ENCODE measurements at regions of chr3 and their contacts with region 1.

Region 1: GRCh38 chr3:42101048-42101447 is 9.9 kb downstream of the TRAK1 start:
- DNase-seq: peak; percentile 37 to 67 (median 56)
- ATAC-seq: peak; percentile 66 to 77 (median 70)
- H3K4me3 ChIP-seq: no peak overlapping the region
- H3K27ac ChIP-seq: peak overlapping the region; percentile 25 to 71 (median 64)
- H3K4me1 ChIP-seq: peaks cover 20 to 73% (median 66%) of the 10 kb centered on the region in 12 donors
- H3K27me3 ChIP-seq: no peaks in the 10 kb centered on the region
- CTCF ChIP-seq: no peak
- POLR2A ChIP-seq: no peak

Region 2: GRCh38 chr3:40971191-40972168 is 1129.6 kb before region 1 on chr3:
- intact Hi-C with region 1: loop called in 1 of 10 experiments (anchors 10 kb)
- DNase-seq: peak; percentile 64 to 85 (median 76)
- ATAC-seq: peak; percentile 80 to 96 (median 94)
- H3K4me3 ChIP-seq: no peak overlapping the region
- H3K27ac ChIP-seq: peak overlapping the region; percentile 35 to 88 (median 72)
- H3K4me1 ChIP-seq: peaks cover 8 to 63% (median 54%) of the 10 kb centered on the region in 12 donors
- H3K27me3 ChIP-seq: no peaks in the 10 kb centered on the region
- CTCF ChIP-seq: peak in 1 of 12 donors; percentile 13
- POLR2A ChIP-seq: no peak

Region 3: DNA sequence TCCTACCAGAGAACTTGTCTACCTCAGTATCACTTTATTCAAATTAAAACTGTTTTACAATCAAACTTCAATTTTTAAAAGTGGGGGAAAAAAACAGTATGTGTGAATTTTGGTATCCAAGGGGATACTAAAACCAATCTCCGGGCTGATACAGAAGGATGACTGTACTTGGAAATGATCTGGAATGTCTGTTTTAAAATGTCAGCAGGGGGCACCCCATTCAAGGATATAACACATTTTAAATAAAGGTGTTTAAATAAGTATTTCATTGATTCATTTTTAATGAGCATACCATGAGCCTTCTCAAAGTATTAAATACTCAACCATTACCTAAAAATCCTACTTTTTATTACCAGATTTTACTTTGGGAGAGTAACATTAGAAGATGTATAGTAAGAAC is 207.1 kb before region 1 on chr3:
- intact Hi-C with region 1: loop called in 8 of 10 experiments (anchors 1 to 5 kb)
- DNase-seq: peak in 1 of 5 donors; percentile 12
- ATAC-seq: no peak
- H3K4me3 ChIP-seq: no peak overlapping the region
- H3K27ac ChIP-seq: no peak overlapping the region
- H3K4me1 ChIP-seq: peaks cover 0 to 7% (median 0%) of the 10 kb centered on the region in 12 donors
- H3K27me3 ChIP-seq: no peaks in the 10 kb centered on the region
- CTCF ChIP-seq: peak; percentile 31 to 71 (median 63)
- POLR2A ChIP-seq: no peak

Region 4: DNA sequence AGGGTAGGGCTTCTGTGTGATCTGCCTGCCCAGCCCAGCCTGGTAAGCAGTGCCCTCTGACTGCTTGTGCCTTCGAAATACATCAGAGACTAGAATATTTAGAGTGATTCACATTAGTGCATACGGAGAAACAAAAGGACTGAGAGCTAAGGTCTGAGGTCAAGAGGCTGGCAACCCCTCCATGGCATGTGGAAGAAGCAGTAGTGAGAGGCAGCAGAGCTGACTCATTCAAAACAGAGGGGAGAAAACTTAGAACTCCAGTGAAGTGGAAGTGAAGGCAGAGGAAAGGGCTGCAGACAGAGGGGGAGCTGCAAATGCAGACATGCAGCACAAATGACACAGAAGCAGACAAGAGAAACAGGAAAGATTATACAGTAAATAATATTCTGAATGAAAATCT is 200.8 kb before region 1 on chr3:
- intact Hi-C with region 1: loop called in 7 of 10 experiments (anchors 2 to 5 kb)
- DNase-seq: no peak
- ATAC-seq: no peak
- H3K4me3 ChIP-seq: no peak overlapping the region
- H3K27ac ChIP-seq: no peak overlapping the region
- H3K4me1 ChIP-seq: peaks cover 0 to 8% (median 0%) of the 10 kb centered on the region in 12 donors
- H3K27me3 ChIP-seq: no peaks in the 10 kb centered on the region
- CTCF ChIP-seq: no peak
- POLR2A ChIP-seq: no peak

Region 5: GRCh38 chr3:41961750-41962679 is 139.0 kb before region 1 on chr3 and contains the start of gene ULK4:
- intact Hi-C with region 1: loop called in 5 of 10 experiments (anchors 2 to 5 kb)
- DNase-seq: peak; percentile 97 to 99 (median 98)
- ATAC-seq: peak; percentile 98
- H3K4me3 ChIP-seq: peak within 1 kb of the TSS; percentile 75 to 98 (median 88)
- H3K27ac ChIP-seq: peak within 1 kb of the TSS in 11 of 12 donors; percentile 52 to 86 (median 75)
- H3K4me1 ChIP-seq: peaks cover 0 to 15% (median 9%) of the 10 kb centered on the region in 12 donors
- H3K27me3 ChIP-seq: no peaks in the 10 kb centered on the region
- CTCF ChIP-seq: no peak
- POLR2A ChIP-seq: peak in 1 of 2 donors; percentile 60
- total RNA-seq, gene ULK4: 1.8 to 6.1 (median 3.7) TPM

Region 6: DNA sequence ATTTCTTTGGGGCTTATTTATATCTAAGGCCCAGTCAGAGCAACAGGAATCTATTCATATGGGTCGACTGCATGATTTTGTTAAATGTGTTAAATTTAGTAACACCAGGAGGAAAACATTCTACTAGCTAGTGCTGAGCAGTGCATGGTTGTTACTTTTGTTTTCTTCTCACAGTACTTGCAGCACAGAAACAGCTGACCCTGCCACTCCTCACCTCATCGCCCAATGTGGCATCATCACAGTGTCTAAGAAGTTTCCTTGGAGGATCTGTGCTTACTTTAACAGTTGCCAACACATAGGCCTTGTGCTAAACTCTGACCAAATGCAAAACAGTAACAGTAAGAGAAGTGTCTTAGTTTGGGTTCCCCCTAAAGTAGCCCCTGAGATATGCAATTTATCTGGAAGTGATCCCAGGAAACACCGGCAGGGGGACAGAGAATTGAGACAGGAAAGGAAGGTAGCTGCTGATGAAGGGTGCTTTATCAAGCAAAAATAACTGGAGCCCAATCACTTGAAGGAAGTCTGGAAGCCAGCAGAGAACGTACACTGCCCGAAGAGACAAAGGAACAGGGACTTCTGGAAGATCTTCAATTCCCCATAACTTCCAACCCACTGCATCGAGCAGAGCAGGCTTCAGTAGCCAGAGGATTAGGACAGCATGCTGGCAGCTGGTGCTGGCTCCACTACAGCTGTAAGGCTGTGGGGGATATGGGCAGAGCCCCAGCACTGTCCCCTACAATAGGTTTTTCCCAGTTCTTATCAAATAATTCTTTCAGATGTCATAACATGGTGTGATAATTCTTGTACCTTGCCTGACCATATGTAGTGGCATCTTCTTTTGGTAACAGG is 103.1 kb before region 1 on chr3:
- intact Hi-C with region 1: loop called in 2 of 10 experiments (anchors 1 kb)
- DNase-seq: no peak
- ATAC-seq: peak in 3 of 4 donors; percentile 27 to 53 (median 52)
- H3K4me3 ChIP-seq: no peak overlapping the region
- H3K27ac ChIP-seq: peak overlapping the region in 3 of 12 donors; percentile 1 to 22 (median 19)
- H3K4me1 ChIP-seq: peaks cover 0 to 14% (median 9%) of the 10 kb centered on the region in 12 donors
- H3K27me3 ChIP-seq: no peaks in the 10 kb centered on the region
- CTCF ChIP-seq: peak; percentile 21 to 61 (median 46)
- POLR2A ChIP-seq: no peak

Region 7: DNA sequence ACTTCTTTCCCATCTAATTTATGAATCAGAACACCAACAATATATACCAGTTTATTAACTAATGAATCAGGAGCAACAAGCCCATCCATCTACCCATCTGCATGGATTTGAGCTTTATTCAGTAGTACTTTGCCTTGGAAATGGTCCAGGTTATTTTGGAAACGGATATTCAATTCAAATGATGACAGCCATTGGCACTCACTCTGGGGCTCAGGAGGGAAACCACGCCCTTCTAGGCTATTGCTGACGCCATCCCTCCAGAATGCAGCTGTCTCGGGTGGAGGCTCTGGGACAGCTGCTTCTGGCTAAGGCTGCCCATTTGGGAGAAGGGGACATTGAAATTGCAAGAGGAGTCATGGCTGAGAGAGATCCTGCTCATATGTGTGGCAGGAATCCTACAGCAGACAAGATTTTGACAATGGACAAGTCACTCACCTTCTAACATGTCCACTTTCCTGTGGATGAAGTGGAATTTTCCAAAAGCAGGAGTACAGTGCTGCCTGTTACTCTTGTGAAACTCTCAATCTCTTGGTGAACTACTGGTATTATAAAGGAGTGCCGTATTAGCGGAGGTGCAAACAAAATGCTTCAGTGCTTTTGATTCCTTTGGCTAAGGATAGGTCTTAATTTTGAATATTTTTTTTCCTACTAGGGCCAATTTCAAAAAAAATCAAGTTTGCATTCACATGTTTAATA is 39.2 kb before region 1 on chr3:
- intact Hi-C with region 1: loop called in 1 of 10 experiments (anchors 5 kb)
- DNase-seq: peak; percentile 85 to 92 (median 91)
- ATAC-seq: peak; percentile 91 to 93 (median 91)
- H3K4me3 ChIP-seq: peak overlapping the region in 8 of 12 donors; percentile 7 to 35 (median 17)
- H3K27ac ChIP-seq: peak overlapping the region; percentile 84 to 94 (median 89)
- H3K4me1 ChIP-seq: peaks cover 22 to 99% (median 90%) of the 10 kb centered on the region in 12 donors
- H3K27me3 ChIP-seq: no peaks in the 10 kb centered on the region
- CTCF ChIP-seq: no peak
- POLR2A ChIP-seq: peak in 1 of 2 donors; percentile 61

Region 8: DNA sequence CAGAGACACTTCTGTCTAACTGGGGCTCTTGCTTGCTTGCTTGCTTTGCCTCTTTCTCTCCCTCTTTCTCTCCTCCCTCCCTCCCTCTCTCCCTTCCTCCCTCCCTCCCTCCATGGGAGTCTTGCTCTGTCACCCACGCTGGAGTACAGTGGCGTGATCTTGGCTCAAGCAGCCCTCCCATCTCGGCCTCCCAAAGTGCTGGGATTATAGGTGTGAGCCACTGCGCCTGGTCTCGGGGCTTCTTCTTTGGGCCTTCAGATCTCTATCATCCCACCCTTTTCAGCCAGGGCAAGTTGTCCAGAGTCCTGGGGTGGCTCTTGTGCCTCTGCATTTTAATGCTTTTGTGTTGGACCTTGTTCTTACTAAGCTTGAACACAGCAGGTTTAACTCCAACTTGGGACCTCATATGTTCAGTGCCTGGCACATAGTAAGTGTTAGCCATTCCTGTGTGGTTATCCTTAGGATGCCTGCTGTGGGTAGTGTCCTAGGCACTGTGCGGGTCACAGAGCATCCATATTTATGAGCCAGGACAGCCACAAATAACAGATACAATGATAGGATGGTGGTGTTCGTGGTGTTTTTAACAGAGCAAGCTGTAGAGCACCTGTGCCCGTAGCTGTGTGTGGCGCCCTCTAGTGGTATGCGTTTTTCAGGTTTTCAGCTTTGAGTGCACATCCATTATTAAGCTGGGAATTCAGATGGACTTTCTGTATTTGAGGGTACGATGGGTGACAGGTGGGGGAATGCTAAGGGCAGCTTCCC is 89.8 kb after region 1 on chr3:
- intact Hi-C with region 1: no loop called
- DNase-seq: peak in 3 of 5 donors; percentile 52 to 61 (median 52)
- ATAC-seq: peak in 3 of 4 donors; percentile 46 to 58 (median 57)
- H3K4me3 ChIP-seq: no peak overlapping the region
- H3K27ac ChIP-seq: no peak overlapping the region
- H3K4me1 ChIP-seq: peaks cover 0 to 57% (median 31%) of the 10 kb centered on the region in 12 donors
- H3K27me3 ChIP-seq: no peaks in the 10 kb centered on the region
- CTCF ChIP-seq: peak; percentile 74 to 90 (median 84)
- POLR2A ChIP-seq: no peak